Activated CD4-positive, alpha-beta T cell treated with anti-CD3 and anti-CD28 coated beads, Interleukin-2, amount 10 ng/mL, durations not matched to agents 24 days and 14 days (primary cell): ENCODE measurements at regions of chr2 and their contacts with region 1.

Region 1: DNA sequence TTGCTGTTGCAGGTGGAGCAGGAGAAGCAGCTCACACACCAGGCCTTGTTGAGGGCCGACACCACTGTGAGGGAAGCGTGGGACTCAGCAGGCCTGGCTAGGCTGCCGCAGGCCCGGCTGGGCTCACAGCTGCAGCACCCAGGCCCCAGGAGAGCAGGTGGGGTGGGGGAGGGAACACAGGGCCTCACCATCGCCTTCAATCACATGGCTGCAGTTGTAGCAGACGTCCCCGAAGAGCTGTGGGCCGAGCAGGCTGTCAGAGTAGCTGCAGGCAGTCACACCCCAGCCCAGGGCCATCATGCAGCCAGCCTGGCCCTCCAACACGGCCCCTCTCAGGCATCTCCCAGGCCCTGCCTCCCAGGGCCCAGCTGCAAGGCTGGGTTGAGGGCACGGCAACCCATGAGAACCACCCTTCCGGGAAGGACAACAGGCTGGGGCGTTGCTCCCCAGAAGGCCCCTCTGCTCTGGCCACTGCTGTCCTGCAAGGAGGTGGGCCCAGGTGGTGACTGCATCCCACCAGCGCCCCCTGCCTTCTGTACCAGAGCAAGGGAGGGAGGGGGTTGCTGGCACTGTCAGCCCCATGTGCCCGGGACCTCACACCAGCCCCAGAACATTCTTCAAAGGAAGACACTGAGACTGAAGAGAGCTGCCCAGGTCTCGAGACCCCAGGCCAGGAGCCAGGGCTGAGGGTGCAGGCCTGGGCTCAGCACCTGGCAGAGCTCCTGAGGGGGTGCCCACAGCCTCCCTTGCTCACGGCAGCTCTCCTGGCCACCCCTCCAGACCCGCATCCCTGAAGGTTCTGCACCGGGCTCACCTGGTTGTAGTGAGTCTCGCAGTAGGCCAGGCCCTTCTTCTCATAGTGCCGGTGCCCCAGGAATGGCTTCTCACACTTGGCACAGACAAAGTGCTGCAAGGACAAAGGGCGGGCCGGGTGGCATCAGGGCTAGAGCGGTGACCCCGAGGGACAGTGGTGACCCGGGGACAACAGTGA is 5.6 kb upstream of the GPR17 start:
- DNase-seq: peak; percentile 77
- H3K4me3 Mint-ChIP-seq: peak overlapping the region; percentile 63
- H3K27ac Mint-ChIP-seq: peak overlapping the region; percentile 77
- H3K4me1 Mint-ChIP-seq: peaks cover 21% of the 10 kb centered on the region
- H3K27me3 Mint-ChIP-seq: no peaks in the 10 kb centered on the region

Region 2: GRCh38 chr2:127701193-127701650 is 60.8 kb after region 1 on chr2 and contains the start of gene SFT2D3:
- intact Hi-C with region 1: loop called (anchors 5 kb)
- DNase-seq: peak; percentile 97
- H3K4me3 Mint-ChIP-seq: peak within 1 kb of the TSS; percentile 92
- H3K27ac Mint-ChIP-seq: peak within 1 kb of the TSS; percentile 94
- H3K4me1 Mint-ChIP-seq: peaks cover 27% of the 10 kb centered on the region
- H3K27me3 Mint-ChIP-seq: no peaks in the 10 kb centered on the region
- total RNA-seq, gene SFT2D3: 5.9 and 6.3 TPM in 2 replicates

Region 3: GRCh38 chr2:127783101-127783500 is 142.7 kb after region 1 on chr2:
- intact Hi-C with region 1: no loop called
- DNase-seq: no peak
- H3K4me3 Mint-ChIP-seq: no peak overlapping the region
- H3K27ac Mint-ChIP-seq: no peak overlapping the region
- H3K4me1 Mint-ChIP-seq: peaks cover 11% of the 10 kb centered on the region
- H3K27me3 Mint-ChIP-seq: no peaks in the 10 kb centered on the region